ENCODE measurements at regions of chr11 and their contacts with region 1.

Region 1: DNA sequence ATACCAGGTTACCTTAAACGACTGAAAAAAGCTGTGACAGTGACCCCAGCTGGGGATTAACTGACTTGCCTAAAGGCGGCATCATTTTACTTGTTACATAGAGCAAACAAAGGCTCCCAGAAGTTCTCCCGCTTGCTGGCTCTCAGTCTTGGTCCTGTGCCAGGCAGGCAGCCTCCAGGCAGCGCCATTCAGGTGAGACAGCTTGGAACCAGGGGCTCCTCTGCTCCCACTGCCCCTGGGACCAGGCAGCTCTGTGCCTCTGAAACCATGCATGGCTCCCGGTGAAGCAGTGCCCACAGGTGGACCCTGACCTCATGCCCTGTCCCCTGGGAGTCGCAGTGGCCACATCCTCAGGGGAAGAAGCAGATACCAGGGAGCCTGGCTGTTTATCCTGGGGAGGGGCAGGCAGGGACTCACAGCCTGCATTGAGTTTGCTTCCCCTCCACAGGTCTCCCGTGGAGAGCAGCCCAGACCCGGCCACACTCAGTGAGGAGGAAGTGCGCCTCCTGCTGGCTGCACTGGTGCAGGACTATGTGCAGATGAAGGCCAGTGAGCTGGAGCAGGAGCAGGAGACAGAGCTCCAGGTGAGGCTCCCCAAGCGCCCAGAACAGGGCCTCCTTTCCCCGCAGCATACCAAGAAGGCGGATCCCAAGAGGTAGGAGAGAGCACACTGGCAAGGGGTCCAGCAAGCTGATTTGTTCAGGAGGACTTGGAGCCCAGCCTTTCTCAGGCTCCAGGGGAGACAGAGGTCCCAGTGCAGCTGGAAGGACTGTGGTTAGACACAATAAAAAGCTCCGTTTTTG is 15.6 kb upstream of the CYP2R1 start:
- DNase-seq: no peak
- CTCF ChIP-seq: peak; percentile 88

Region 2: DNA sequence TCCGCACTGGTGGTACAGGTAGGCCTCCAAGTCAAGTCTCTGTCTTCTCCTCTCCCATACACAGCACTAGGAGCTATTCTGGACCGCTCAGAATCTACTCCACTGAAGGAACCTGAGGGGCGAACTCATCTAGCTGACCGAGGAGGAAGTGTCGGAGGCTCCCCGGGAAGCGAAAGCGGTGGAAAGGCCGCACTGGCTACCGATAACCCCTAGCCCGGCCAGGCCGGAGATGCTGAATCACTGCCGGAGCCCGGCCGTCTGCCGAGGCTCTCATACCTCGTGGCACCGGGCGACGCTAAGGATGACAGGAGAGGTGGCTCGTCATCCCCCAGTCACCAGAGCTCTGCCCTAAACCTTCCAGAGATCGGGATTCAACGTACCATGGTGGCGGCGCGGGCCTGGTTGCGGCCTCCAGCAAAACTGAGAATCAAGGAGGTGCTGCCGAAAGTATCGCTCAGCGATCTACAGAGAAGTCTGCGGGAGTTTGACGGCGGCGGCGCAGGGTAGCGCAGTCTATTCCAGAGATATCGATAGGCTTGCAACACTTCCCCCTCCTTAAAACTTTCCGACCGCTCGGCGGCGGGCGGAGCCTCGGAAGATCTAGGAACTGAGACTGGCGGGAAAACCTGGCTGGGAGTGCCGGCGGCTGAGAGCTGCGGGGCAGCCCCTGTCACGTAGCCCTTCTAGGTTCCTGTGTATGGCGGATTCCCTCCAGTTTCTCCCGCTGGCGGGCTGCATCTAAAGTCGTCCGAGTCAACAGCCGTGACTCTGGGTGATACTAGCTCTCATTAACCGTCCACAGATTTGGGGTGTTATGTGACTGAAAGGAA is 387.5 kb before region 1 on chr11 and contains the start of gene PSMA1:
- CTCF ChIA-PET with region 1: interaction called, 14 read pairs
- POLR2A ChIA-PET with region 1: interaction called, 3 read pairs
- DNase-seq: peak; percentile 90
- CTCF ChIP-seq: no peak

Region 3: DNA sequence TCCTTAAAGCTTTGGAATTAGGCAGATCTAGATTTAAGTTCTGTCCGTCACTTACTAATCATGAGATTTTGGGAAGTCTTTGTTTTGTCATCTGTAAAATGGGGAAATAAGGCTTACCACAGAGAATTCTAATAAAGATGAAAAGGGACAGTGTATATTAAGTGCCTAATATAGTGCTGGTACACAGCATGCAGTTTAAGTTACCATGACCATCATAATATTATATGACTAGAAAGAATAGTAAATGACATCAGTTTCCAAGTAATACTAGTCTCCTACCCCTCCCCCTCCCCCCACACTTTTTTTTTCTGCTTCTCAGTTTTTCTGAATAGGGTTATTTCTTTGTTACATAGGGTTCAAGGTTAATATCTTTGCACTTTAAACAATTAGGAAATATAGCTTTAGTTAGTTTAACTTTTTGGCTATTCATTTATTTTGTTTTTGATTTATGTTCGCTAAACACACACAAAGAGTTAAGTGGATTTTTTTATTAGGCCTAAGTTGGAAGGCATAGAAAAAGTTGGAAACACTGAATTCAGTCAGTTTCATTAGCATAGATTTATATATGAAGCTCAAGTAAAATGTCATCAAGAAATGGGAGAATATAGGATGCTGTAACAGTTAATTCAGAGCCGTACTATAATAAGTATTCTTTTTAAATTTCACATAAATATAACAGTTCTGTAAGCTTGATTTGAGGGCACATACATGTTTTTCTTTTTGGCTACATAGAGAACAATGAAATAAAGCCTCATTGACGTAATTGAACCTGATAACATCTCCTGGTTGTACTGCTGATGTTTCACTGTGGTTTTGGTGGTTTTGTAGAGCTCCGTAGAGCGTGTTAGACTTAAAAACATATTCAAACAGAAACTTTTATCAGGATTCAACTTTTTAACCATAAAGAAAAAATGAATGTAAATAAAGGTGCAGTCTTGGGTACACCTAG is 142.8 kb before region 1 on chr11:
- CTCF ChIA-PET with region 1: interaction called, 47 read pairs
- POLR2A ChIA-PET with region 1: no interaction called
- DNase-seq: peak; percentile 16
- CTCF ChIP-seq: no peak

Region 4: GRCh38 chr11:14803846-14804245 is 103.8 kb before region 1 on chr11:
- CTCF ChIA-PET with region 1: interaction called, 26 read pairs
- POLR2A ChIA-PET with region 1: no interaction called
- DNase-seq: no peak
- CTCF ChIP-seq: no peak

Region 5: DNA sequence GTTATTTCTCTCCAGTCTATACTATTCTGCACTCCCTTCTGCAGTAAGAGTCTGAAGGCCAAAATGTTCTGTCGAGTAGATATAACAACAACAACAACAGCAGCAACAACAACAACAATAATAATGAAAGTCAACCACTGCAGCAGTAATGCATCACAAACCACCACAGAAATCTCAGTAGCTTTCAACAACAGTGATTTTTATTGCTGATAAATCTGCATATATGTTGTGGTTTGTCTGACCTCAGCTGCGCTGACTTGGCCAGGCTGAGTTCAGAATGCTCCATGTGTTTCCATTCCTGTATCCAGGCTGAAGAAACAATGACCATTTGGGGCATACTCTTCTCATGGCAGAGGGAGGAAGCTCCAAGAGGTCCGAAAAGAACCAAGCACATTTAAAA is 16.7 kb after region 1 on chr11:
- CTCF ChIA-PET with region 1: interaction called, 99 read pairs
- POLR2A ChIA-PET with region 1: no interaction called
- DNase-seq: no peak
- CTCF ChIP-seq: no peak

Region 6: GRCh38 chr11:15006139-15006759 is 98.6 kb after region 1 on chr11:
- CTCF ChIA-PET with region 1: interaction called, 27 read pairs
- POLR2A ChIA-PET with region 1: no interaction called
- DNase-seq: peak; percentile 15
- CTCF ChIP-seq: peak; percentile 47

Region 7: GRCh38 chr11:15216678-15217077 is 309.1 kb after region 1 on chr11:
- CTCF ChIA-PET with region 1: interaction called, 19 read pairs
- POLR2A ChIA-PET with region 1: no interaction called
- DNase-seq: peak; percentile 29
- CTCF ChIP-seq: peak; percentile 21

Measured in GM10248 (cell line).